B cell (primary cell): ENCODE measurements at regions of chr10 and their contacts with region 1.

Region 1: GRCh38 chr10:69123747-69124562 is at the start of gene VPS26A:
- DNase-seq: peak; percentile 99
- ATAC-seq: peak; percentile 96
- H3K4me3 ChIP-seq: peak within 1 kb of the TSS; percentile 57 to 92 (median 84)
- H3K4me3 Mint-ChIP-seq: peak within 1 kb of the TSS; percentile 93
- H3K27ac ChIP-seq: peak within 1 kb of the TSS; percentile 89 to 95
- H3K27ac Mint-ChIP-seq: peak within 1 kb of the TSS; percentile 98
- H3K4me1 ChIP-seq: peaks cover 12% of the 10 kb centered on the region in 2 donors
- H3K4me1 Mint-ChIP-seq: peaks cover 15% of the 10 kb centered on the region
- H3K27me3 ChIP-seq: no peaks in the 10 kb centered on the region
- H3K27me3 Mint-ChIP-seq: no peaks in the 10 kb centered on the region
- CTCF ChIP-seq: peak; percentile 34
- total RNA-seq, gene VPS26A: 29.9 and 35.3 TPM in 2 replicates

Region 2: GRCh38 chr10:68331455-68332258 is 792.3 kb before region 1 on chr10 and contains the start of gene HNRNPH3:
- CTCF ChIA-PET with region 1: no interaction called
- POLR2A ChIA-PET with region 1: no interaction called
- intact Hi-C with region 1: loop called (anchors 2 kb)
- DNase-seq: peak; percentile 100
- ATAC-seq: peak; percentile 84
- H3K4me3 ChIP-seq: peak within 1 kb of the TSS; percentile 77 to 95 (median 90)
- H3K4me3 Mint-ChIP-seq: peak within 1 kb of the TSS; percentile 99
- H3K27ac ChIP-seq: peak within 1 kb of the TSS; percentile 93 to 94
- H3K27ac Mint-ChIP-seq: peak within 1 kb of the TSS; percentile 100
- H3K4me1 ChIP-seq: peaks cover 42 to 51% of the 10 kb centered on the region in 2 donors
- H3K4me1 Mint-ChIP-seq: peaks cover 62% of the 10 kb centered on the region
- H3K27me3 ChIP-seq: no peaks in the 10 kb centered on the region
- H3K27me3 Mint-ChIP-seq: no peaks in the 10 kb centered on the region
- CTCF ChIP-seq: no peak
- total RNA-seq, gene HNRNPH3: 120 and 124 TPM in 2 replicates

Region 3: GRCh38 chr10:68901104-68901927 is 222.6 kb before region 1 on chr10 and contains the start of gene DDX50:
- CTCF ChIA-PET with region 1: no interaction called
- POLR2A ChIA-PET with region 1: no interaction called
- intact Hi-C with region 1: loop called (anchors 1 kb)
- DNase-seq: peak; percentile 97
- ATAC-seq: peak; percentile 94
- H3K4me3 ChIP-seq: peak within 1 kb of the TSS; percentile 67 to 97 (median 91)
- H3K4me3 Mint-ChIP-seq: peak within 1 kb of the TSS; percentile 98
- H3K27ac ChIP-seq: peak within 1 kb of the TSS; percentile 97 to 100
- H3K27ac Mint-ChIP-seq: peak within 1 kb of the TSS; percentile 100
- H3K4me1 ChIP-seq: peaks cover 20 to 22% of the 10 kb centered on the region in 2 donors
- H3K4me1 Mint-ChIP-seq: peaks cover 32% of the 10 kb centered on the region
- H3K27me3 ChIP-seq: no peaks in the 10 kb centered on the region
- H3K27me3 Mint-ChIP-seq: peaks cover 3% of the 10 kb centered on the region
- CTCF ChIP-seq: no peak
- total RNA-seq, gene DDX50: 38.6 and 39.3 TPM in 2 replicates

Region 4: GRCh38 chr10:68988530-68989316 is 135.2 kb before region 1 on chr10 and contains the start of gene KIFBP:
- CTCF ChIA-PET with region 1: no interaction called
- POLR2A ChIA-PET with region 1: no interaction called
- intact Hi-C with region 1: loop called (anchors 1 kb)
- DNase-seq: peak; percentile 92
- ATAC-seq: peak; percentile 87
- H3K4me3 ChIP-seq: peak within 1 kb of the TSS; percentile 67 to 90 (median 79)
- H3K4me3 Mint-ChIP-seq: peak within 1 kb of the TSS; percentile 95
- H3K27ac ChIP-seq: peak within 1 kb of the TSS in 1 of 2 donors; percentile 59
- H3K27ac Mint-ChIP-seq: peak within 1 kb of the TSS; percentile 91
- H3K4me1 ChIP-seq: peaks cover 18 to 20% of the 10 kb centered on the region in 2 donors
- H3K4me1 Mint-ChIP-seq: peaks cover 40% of the 10 kb centered on the region
- H3K27me3 ChIP-seq: no peaks in the 10 kb centered on the region
- H3K27me3 Mint-ChIP-seq: no peaks in the 10 kb centered on the region
- CTCF ChIP-seq: peak; percentile 32
- total RNA-seq, gene KIFBP: 13.5 and 15.7 TPM in 2 replicates

Region 5: DNA sequence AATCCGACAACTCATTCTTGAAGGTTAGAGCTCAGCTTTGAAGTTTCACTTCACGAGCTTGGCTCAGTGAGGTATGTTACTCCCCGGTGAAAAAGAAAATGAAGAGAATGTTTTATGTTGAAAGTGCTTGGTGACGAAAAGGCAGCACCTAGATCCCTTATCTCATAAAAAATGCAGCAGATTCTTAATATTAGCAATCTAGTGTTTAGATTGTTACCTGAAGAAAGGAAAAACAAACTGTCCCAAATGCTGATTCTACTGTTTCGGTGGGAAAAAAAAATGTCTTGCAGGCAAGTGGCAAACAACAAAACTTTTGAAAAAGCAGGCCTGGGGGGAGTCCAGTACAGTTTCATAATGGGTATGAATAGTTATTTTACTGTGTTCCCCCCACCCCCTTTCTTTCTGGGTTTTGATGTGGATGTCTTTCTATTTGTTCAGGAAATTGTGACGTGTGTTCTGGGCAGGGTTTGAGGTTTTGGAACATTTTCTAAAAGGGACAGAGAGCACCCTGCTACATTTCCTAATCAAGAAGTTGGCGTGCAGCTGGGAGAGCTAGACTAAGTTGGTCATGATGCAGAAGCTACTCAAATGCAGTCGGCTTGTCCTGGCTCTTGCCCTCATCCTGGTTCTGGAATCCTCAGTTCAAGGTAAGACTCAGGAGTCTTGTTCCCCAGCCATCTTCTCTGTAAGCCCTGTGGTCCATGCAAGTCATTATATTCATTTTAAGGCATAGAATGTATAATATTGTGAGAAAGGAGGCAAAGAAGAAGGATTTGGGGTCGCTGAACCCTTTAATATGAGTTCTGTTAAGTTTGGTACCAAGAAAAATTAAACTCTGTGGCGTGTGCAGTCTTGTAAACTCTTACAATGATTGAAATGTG is 36.1 kb before region 1 on chr10 and contains the start of gene SRGN:
- CTCF ChIA-PET with region 1: interaction called, 5 read pairs
- POLR2A ChIA-PET with region 1: no interaction called
- intact Hi-C with region 1: loop called (anchors 1 kb)
- DNase-seq: peak; percentile 78
- ATAC-seq: peak; percentile 68
- H3K4me3 ChIP-seq: peak within 1 kb of the TSS; percentile 40 to 95 (median 64)
- H3K4me3 Mint-ChIP-seq: peak within 1 kb of the TSS; percentile 87
- H3K27ac ChIP-seq: peak within 1 kb of the TSS; percentile 73 to 91
- H3K27ac Mint-ChIP-seq: peak within 1 kb of the TSS; percentile 94
- H3K4me1 ChIP-seq: peaks cover 38 to 39% of the 10 kb centered on the region in 2 donors
- H3K4me1 Mint-ChIP-seq: peaks cover 55% of the 10 kb centered on the region
- H3K27me3 ChIP-seq: no peaks in the 10 kb centered on the region
- H3K27me3 Mint-ChIP-seq: no peaks in the 10 kb centered on the region
- CTCF ChIP-seq: no peak
- total RNA-seq, gene SRGN: 47.3 and 49.9 TPM in 2 replicates

Region 6: DNA sequence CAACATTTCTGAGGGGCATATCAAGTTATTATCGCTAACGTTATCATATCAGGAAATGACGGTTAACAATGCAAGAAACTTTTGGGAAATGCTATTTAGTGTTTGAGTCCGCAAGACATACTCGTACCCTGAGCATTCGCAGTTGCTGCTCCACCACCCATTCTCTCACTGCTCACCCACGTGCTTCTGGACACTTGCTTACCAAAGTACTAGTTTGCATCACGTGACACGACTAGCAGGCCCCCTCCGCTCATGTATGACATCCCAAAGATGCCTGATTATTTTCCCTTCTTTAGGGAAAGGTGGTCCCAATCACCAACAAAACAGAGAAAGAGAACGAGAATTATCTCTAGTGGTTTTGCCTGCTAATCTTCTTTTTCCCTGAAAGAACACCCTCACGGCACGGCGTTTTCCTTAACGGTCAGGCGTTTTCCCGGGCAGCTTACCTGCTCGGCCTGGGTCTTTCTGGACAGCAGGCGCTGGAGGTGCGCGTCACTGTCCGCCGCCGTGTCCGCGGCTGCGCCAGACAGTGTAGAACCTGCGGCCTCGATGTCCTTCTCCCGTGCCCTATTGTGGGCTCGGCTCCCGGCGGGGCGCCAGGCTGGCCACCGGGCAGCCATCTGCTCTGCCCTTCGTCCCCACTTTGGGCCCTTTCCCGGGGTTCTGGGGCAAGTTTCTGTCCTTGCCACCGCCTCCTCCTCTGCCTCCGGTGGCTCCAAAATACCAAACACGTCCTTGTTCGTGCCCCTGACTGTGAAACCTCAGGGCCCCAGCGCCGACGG is 56.0 kb after region 1 on chr10 and contains the start of gene SUPV3L1:
- CTCF ChIA-PET with region 1: interaction called, 6 read pairs
- POLR2A ChIA-PET with region 1: no interaction called
- intact Hi-C with region 1: loop called (anchors 1 kb)
- DNase-seq: peak; percentile 96
- ATAC-seq: peak; percentile 87
- H3K4me3 ChIP-seq: peak within 1 kb of the TSS; percentile 79 to 96 (median 94)
- H3K4me3 Mint-ChIP-seq: peak within 1 kb of the TSS; percentile 97
- H3K27ac ChIP-seq: peak within 1 kb of the TSS; percentile 91 to 99
- H3K27ac Mint-ChIP-seq: peak within 1 kb of the TSS; percentile 100
- H3K4me1 ChIP-seq: peaks cover 11 to 18% of the 10 kb centered on the region in 2 donors
- H3K4me1 Mint-ChIP-seq: peaks cover 41% of the 10 kb centered on the region
- H3K27me3 ChIP-seq: no peaks in the 10 kb centered on the region
- H3K27me3 Mint-ChIP-seq: no peaks in the 10 kb centered on the region
- CTCF ChIP-seq: no peak
- total RNA-seq, gene SUPV3L1: 37.1 and 40.4 TPM in 2 replicates

Region 7: DNA sequence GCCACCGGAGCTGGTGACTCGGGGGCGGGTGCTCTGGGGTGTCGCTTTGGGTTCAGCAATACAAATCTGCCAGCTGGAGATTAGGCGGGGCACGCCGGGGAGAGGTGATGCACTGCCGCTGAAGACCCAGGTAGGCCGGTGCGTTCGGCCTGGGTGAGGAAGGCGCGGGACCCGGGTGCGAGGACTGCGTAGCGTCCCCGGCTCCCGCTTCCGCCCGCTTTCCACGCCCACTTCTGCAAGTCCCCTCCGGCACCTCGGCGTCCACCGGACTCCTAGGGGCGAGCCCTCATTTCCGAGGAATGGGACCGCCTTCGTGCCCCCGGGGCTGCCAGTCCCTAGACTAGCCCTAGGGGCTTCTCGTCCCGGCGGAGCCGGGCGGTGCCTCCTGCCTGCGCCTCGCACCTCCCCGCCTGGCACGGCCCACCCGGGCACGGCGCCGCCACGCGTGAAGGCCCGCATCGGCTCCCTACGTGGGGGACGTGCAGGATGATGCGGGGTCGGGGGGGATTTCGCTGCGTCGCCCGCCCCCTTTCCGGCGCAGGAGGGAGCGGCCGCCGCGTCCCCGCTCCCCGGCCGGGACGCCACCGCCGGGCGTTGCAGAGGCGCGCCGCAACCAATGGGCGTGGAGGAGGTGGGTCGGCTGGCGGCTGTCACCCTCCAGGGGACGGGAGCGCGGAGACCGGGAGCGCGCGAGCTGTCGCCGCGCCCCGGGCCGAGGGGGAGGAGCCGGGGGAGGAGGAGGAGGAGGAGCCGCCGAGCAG is 194.3 kb after region 1 on chr10:
- CTCF ChIA-PET with region 1: no interaction called
- POLR2A ChIA-PET with region 1: no interaction called
- intact Hi-C with region 1: loop called (anchors 1 kb)
- DNase-seq: peak; percentile 93
- ATAC-seq: peak; percentile 93
- H3K4me3 ChIP-seq: peak overlapping the region; percentile 3 to 98 (median 94)
- H3K4me3 Mint-ChIP-seq: peak overlapping the region; percentile 96
- H3K27ac ChIP-seq: peak overlapping the region; percentile 82 to 85
- H3K27ac Mint-ChIP-seq: peak overlapping the region; percentile 91
- H3K4me1 ChIP-seq: peaks cover 22 to 31% of the 10 kb centered on the region in 2 donors
- H3K4me1 Mint-ChIP-seq: peaks cover 37% of the 10 kb centered on the region
- H3K27me3 ChIP-seq: no peaks in the 10 kb centered on the region
- H3K27me3 Mint-ChIP-seq: no peaks in the 10 kb centered on the region
- CTCF ChIP-seq: no peak